ENCODE measurements at regions of chr19 and their contacts with region 1.

Region 1: GRCh38 chr19:7355151-7355820 is 6.5 kb downstream of the ARHGEF18 start:
- DNase-seq: no peak
- ATAC-seq: no peak
- H3K4me3 ChIP-seq: no peak overlapping the region
- H3K4me3 Mint-ChIP-seq: peak overlapping the region in 6 of 10 donors; percentile 47 to 99 (median 86)
- H3K27ac ChIP-seq: no peak overlapping the region
- H3K27ac Mint-ChIP-seq: peak overlapping the region in 8 of 9 donors; percentile 80 to 94 (median 88)
- H3K4me1 ChIP-seq: peaks cover 27 to 54% of the 10 kb centered on the region in 2 donors
- H3K4me1 Mint-ChIP-seq: peaks cover 49 to 95% (median 71%) of the 10 kb centered on the region in 7 donors
- H3K27me3 ChIP-seq: no peaks in the 10 kb centered on the region
- H3K27me3 Mint-ChIP-seq: no peaks in the 10 kb centered on the region

Region 2: GRCh38 chr19:7340959-7341837 is 14.1 kb before region 1 on chr19:
- CTCF ChIA-PET with region 1: interaction called, 31 read pairs
- POLR2A ChIA-PET with region 1: interaction called, 14 read pairs
- intact Hi-C with region 1: no loop called
- DNase-seq: peak; percentile 65 to 91 (median 77)
- ATAC-seq: peak; percentile 60
- H3K4me3 ChIP-seq: no peak overlapping the region
- H3K4me3 Mint-ChIP-seq: peak overlapping the region in 7 of 10 donors; percentile 11 to 74 (median 39)
- H3K27ac ChIP-seq: no peak overlapping the region
- H3K27ac Mint-ChIP-seq: peak overlapping the region; percentile 14 to 95 (median 86)
- H3K4me1 ChIP-seq: peaks cover 37 to 39% of the 10 kb centered on the region in 2 donors
- H3K4me1 Mint-ChIP-seq: peaks cover 29 to 64% (median 59%) of the 10 kb centered on the region in 7 donors
- H3K27me3 ChIP-seq: no peaks in the 10 kb centered on the region
- H3K27me3 Mint-ChIP-seq: peaks cover 0 to 12% (median 0%) of the 10 kb centered on the region in 5 donors

Region 3: GRCh38 chr19:7366701-7367420 is 11.6 kb after region 1 on chr19:
- CTCF ChIA-PET with region 1: interaction called, 13 read pairs
- POLR2A ChIA-PET with region 1: interaction called, 31 read pairs
- intact Hi-C with region 1: no loop called
- DNase-seq: peak in 1 of 9 donors; percentile 22
- ATAC-seq: peak; percentile 50
- H3K4me3 ChIP-seq: no peak overlapping the region
- H3K4me3 Mint-ChIP-seq: no peak overlapping the region
- H3K27ac ChIP-seq: no peak overlapping the region
- H3K27ac Mint-ChIP-seq: peak overlapping the region in 7 of 9 donors; percentile 38 to 83 (median 63)
- H3K4me1 ChIP-seq: peaks cover 0 to 17% of the 10 kb centered on the region in 2 donors
- H3K4me1 Mint-ChIP-seq: peaks cover 8 to 56% (median 44%) of the 10 kb centered on the region in 7 donors
- H3K27me3 ChIP-seq: no peaks in the 10 kb centered on the region
- H3K27me3 Mint-ChIP-seq: no peaks in the 10 kb centered on the region

Region 4: GRCh38 chr19:7456964-7457541 is 101.8 kb after region 1 on chr19:
- CTCF ChIA-PET with region 1: no interaction called
- POLR2A ChIA-PET with region 1: no interaction called
- intact Hi-C with region 1: no loop called
- DNase-seq: no peak
- ATAC-seq: no peak
- H3K4me3 ChIP-seq: no peak overlapping the region
- H3K4me3 Mint-ChIP-seq: no peak overlapping the region
- H3K27ac ChIP-seq: no peak overlapping the region
- H3K27ac Mint-ChIP-seq: peak overlapping the region in 1 of 9 donors; percentile 86
- H3K4me1 ChIP-seq: no peaks in the 10 kb centered on the region
- H3K4me1 Mint-ChIP-seq: peaks cover 0 to 37% (median 21%) of the 10 kb centered on the region in 7 donors
- H3K27me3 ChIP-seq: no peaks in the 10 kb centered on the region
- H3K27me3 Mint-ChIP-seq: no peaks in the 10 kb centered on the region

Measured in naive thymus-derived CD4-positive, alpha-beta T cell (primary cell).